Breast epithelium (tissue), 4 donors: ENCODE measurements at regions of chr6 and their contacts with region 1.

Region 1: DNA sequence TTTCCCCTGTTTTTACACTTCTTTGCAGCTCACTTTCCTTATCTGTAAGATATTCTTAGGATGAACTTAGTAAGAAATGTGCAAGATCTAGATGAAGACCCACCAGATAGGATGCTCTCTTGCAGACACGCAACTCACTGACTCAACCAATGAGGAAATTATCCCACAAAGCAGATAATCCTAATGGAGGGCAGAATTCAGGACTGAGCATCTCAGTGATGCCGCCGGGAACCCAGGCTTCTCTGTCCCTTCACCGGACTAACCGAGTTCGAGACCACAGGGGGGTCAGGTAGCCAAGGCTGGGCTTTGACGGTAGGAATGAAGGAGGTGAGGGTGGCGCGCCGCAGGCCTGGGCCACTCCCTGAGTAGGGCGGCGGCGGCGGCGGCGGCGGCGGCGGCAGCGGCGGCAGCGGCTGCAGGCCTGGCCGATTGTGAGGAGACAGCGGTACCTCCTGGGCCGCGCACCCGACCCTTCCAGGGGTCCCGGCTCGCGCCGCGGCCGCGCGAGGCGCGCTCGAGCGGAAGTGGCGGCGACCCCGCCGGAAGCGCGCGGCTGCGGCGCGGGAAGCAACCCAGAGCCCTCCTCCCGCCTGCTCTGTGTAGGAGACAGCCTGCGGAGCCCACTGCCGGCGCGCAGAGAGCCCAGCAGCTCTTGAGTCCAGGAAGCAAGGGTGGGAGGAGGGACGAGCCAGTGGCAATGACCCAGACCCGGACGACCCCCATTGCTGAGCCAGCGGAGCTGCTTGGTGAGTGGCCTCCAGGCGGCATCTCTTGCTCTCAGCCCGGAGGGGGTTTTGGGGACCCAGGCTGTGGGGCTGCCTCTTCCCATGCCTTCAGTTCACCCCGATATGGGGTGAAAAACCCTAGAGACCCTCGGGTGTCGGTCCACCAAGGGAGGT is at the start of gene KHDC1:
- DNase-seq: no peak
- H3K4me3 ChIP-seq: peak within 1 kb of the TSS; percentile 54 to 95 (median 69)
- H3K27ac ChIP-seq: peak within 1 kb of the TSS; percentile 60 to 84
- H3K4me1 ChIP-seq: no peaks in the 10 kb centered on the region
- H3K27me3 ChIP-seq: no peaks in the 10 kb centered on the region
- CTCF ChIP-seq: no peak
- POLR2A ChIP-seq: no peak
- total RNA-seq, gene KHDC1: 0.32 to 1.0 (median 0.66) TPM

Region 2: GRCh38 chr6:73225396-73225795 is 37.5 kb before region 1 on chr6 and contains the start of gene KHDC1L:
- intact Hi-C with region 1: loop called (anchors 1 kb)
- DNase-seq: no peak
- H3K4me3 ChIP-seq: no peak within 1 kb of the TSS
- H3K27ac ChIP-seq: no peak within 1 kb of the TSS
- H3K4me1 ChIP-seq: no peaks in the 10 kb centered on the region
- H3K27me3 ChIP-seq: no peaks in the 10 kb centered on the region
- CTCF ChIP-seq: no peak
- POLR2A ChIP-seq: no peak
- total RNA-seq, gene KHDC1L: not detected